ENCODE measurements at regions of chr2 and their contacts with region 1.

Region 1: DNA sequence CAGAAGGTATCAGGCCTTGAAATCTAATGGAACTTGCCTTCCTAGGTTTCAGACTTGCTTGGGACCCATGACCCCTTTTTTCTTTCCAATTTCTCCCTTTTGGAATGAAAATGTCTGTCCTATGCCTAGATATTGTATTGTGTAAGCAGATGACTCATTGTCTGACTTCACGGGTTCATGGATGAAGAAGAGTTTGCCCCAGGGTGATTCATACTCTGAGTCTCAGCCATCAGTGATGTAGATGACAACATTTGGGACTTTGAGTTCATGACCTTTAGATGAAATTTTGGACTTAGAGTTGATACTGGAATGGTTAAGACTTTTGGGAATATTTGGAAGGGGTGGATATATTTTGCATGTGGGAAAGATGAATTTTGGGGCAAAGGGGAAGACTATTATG is 11.2 kb upstream of the SCYGR5 start:
- DNase-seq: peak in 1 of 9 experiments; percentile 2
- ATAC-seq: no peak
- H3K4me3 ChIP-seq: no peak overlapping the region
- H3K4me3 Mint-ChIP-seq: no peak overlapping the region
- H3K27ac ChIP-seq: no peak overlapping the region
- H3K27ac Mint-ChIP-seq: no peak overlapping the region
- H3K4me1 ChIP-seq: no peaks in the 10 kb centered on the region
- H3K4me1 Mint-ChIP-seq: no peaks in the 10 kb centered on the region
- H3K27me3 ChIP-seq: no peaks in the 10 kb centered on the region
- H3K27me3 Mint-ChIP-seq: no peaks in the 10 kb centered on the region
- CTCF ChIP-seq: no peak

Region 2: GRCh38 chr2:227479865-227480475 is 175.5 kb before region 1 on chr2:
- CTCF ChIA-PET with region 1: interaction called, 4 read pairs
- POLR2A ChIA-PET with region 1: no interaction called
- intact Hi-C with region 1: loop called in 1 of 2 experiments (anchors 10 kb)
- DNase-seq: peak in 2 of 9 experiments; percentile 30 to 53
- ATAC-seq: peak; percentile 74
- H3K4me3 ChIP-seq: no peak overlapping the region
- H3K4me3 Mint-ChIP-seq: peak overlapping the region; percentile 3
- H3K27ac ChIP-seq: no peak overlapping the region
- H3K27ac Mint-ChIP-seq: peak overlapping the region; percentile 2
- H3K4me1 ChIP-seq: peaks cover 49% of the 10 kb centered on the region
- H3K4me1 Mint-ChIP-seq: peaks cover 71% of the 10 kb centered on the region
- H3K27me3 ChIP-seq: no peaks in the 10 kb centered on the region
- H3K27me3 Mint-ChIP-seq: no peaks in the 10 kb centered on the region
- CTCF ChIP-seq: no peak

Region 3: DNA sequence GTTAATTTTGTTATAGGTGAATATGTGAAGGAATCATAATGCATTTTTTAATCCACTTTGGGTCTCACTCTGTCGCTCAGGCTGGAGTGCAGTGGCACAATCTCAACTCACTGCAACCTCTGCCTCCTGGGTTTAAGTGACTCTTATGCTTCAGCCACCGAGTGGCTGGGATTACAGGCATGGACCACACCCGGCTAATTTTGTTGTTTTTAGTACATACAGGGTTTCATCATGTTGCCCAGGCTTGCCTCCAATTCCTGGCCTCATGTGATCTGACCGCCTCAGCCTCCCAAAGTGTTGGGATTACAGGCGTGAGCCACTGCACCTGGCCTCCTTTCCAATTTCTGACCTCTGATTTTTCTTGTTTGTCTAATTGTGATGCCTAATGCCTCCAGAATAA is 28.8 kb after region 1 on chr2:
- CTCF ChIA-PET with region 1: no interaction called
- POLR2A ChIA-PET with region 1: no interaction called
- intact Hi-C with region 1: no loop called
- DNase-seq: no peak
- ATAC-seq: no peak
- H3K4me3 ChIP-seq: no peak overlapping the region
- H3K4me3 Mint-ChIP-seq: no peak overlapping the region
- H3K27ac ChIP-seq: no peak overlapping the region
- H3K27ac Mint-ChIP-seq: no peak overlapping the region
- H3K4me1 ChIP-seq: no peaks in the 10 kb centered on the region
- H3K4me1 Mint-ChIP-seq: no peaks in the 10 kb centered on the region
- H3K27me3 ChIP-seq: no peaks in the 10 kb centered on the region
- H3K27me3 Mint-ChIP-seq: peaks cover 19% of the 10 kb centered on the region
- CTCF ChIP-seq: no peak